AG04449 (cell line): ENCODE measurements at regions of chr4 and their contacts with region 1.

Region 1: GRCh38 chr4:87848622-87849351 is 16.0 kb downstream of the MEPE start:
- DNase-seq: no peak
- H3K4me3 ChIP-seq: no peak overlapping the region
- CTCF ChIP-seq: peak; percentile 60

Region 2: GRCh38 chr4:87268411-87268810 is 580.4 kb before region 1 on chr4:
- CTCF ChIA-PET with region 1: no interaction called
- POLR2A ChIA-PET with region 1: no interaction called
- DNase-seq: no peak
- H3K4me3 ChIP-seq: no peak overlapping the region
- CTCF ChIP-seq: no peak

Region 3: DNA sequence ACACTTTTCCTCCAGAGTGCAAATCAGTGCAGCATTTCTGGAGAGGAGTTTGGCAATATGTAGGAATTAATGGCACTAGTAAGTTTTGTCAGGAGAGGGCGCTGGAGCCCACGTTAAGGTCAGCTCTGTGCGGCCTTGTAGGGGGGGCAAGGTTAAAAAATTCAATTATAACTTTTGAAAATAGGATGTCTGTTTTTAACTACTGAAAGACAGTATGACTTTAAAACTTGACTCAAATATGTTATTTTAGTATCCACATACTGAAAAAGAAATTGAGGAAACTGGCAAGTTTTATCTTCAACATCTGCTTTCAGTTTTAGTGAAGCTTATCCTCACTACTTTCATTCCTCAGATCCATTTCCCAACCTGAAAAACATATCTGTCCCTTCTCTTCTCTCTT is 495.2 kb before region 1 on chr4:
- CTCF ChIA-PET with region 1: interaction called, 12 read pairs
- POLR2A ChIA-PET with region 1: no interaction called
- DNase-seq: no peak
- H3K4me3 ChIP-seq: no peak overlapping the region
- CTCF ChIP-seq: peak; percentile 46

Region 4: DNA sequence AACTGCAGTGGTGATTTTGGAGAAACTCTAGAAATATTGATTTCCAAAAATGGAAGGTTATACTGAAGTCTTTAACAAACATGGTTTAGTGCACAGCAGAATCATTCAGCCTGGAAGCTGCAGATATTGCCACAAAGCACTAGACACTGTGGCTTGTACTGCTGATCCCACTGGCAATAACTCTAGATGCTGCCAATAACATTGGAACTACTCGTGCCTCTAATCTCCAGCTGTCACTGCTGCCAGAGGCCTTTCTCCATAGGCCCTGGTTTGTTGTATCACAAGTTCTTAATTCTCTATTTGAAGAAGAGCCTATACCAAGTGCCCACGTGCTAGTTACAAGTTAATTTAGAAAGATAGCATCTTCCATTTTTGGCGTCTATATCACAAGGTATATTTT is 179.4 kb before region 1 on chr4:
- CTCF ChIA-PET with region 1: interaction called, 17 read pairs
- POLR2A ChIA-PET with region 1: no interaction called
- DNase-seq: no peak
- H3K4me3 ChIP-seq: no peak overlapping the region
- CTCF ChIP-seq: no peak

Region 5: GRCh38 chr4:87865960-87866598 is 17.3 kb after region 1 on chr4:
- CTCF ChIA-PET with region 1: interaction called, 17 read pairs
- POLR2A ChIA-PET with region 1: no interaction called
- DNase-seq: peak; percentile 16
- H3K4me3 ChIP-seq: no peak overlapping the region
- CTCF ChIP-seq: no peak

Region 6: GRCh38 chr4:87973283-87974169 is 124.7 kb after region 1 on chr4:
- CTCF ChIA-PET with region 1: interaction called, 348 read pairs
- POLR2A ChIA-PET with region 1: no interaction called
- DNase-seq: peak; percentile 82
- H3K4me3 ChIP-seq: peak overlapping the region; percentile 43
- CTCF ChIP-seq: peak; percentile 61

Region 7: GRCh38 chr4:88007304-88008121 is 158.7 kb after region 1 on chr4 and contains the start of gene PKD2:
- CTCF ChIA-PET with region 1: interaction called, 10 read pairs
- POLR2A ChIA-PET with region 1: no interaction called
- DNase-seq: no peak
- H3K4me3 ChIP-seq: peak within 1 kb of the TSS; percentile 78
- CTCF ChIP-seq: no peak

Region 8: DNA sequence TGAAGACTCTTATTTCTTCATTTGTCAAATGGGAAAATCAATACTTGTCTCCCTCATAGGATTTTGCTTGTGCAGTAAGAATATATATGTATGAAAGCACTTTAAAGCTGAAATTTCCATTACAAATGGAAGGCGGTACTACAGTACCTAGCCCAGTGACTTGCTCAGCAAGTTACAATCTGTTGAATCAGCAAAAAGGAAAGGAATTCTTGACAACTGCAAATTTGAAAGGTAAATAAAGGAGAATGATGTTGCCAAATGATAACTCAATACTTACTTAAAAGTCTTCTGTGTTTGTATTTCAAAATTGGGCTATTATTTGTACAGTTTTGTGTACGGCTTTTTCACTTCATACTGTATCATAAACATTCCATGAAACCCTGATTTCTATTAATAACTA is 229.8 kb after region 1 on chr4:
- CTCF ChIA-PET with region 1: no interaction called
- POLR2A ChIA-PET with region 1: no interaction called
- DNase-seq: no peak
- H3K4me3 ChIP-seq: no peak overlapping the region
- CTCF ChIP-seq: no peak

Region 9: DNA sequence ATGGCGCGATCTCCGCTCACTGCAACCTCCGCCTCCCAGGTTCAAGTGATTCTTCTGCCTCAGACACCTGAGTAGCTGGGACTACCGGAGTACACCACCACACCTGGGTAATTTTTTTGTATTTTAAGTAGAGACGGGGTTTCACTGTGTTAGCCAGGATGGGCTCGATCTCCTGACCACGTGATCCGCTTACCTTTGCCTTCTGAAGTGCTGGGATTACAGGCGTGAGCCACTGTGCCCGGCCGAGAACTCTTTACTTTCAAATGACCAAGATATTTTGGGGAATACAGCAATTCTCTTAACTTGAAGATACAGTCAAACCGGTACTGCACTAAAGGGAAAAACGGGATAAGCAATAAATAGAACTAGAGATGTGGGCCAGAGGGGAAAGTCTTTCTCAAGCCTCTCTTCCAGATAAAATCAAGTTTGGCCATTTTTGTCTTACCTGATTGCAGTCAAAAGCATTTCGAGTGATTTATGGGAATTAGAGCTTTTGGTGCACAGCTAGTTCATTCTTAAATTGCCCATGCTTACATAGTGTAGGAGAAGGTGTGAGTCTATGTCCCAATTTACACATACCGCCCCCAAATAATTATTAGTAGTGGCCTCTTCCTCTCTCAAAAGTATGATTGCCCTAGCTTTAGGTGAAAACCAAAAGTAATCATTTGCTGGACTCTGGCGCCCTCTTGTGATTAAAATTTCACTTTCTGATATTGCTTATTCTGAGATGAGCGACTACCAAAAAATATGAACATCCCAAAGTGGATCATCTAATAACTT is 362.9 kb after region 1 on chr4:
- CTCF ChIA-PET with region 1: interaction called, 210 read pairs
- POLR2A ChIA-PET with region 1: interaction called, 5 read pairs
- DNase-seq: no peak
- H3K4me3 ChIP-seq: no peak overlapping the region
- CTCF ChIP-seq: peak; percentile 28

Region 10: GRCh38 chr4:88390128-88390527 is 541.3 kb after region 1 on chr4:
- CTCF ChIA-PET with region 1: no interaction called
- POLR2A ChIA-PET with region 1: no interaction called
- DNase-seq: no peak
- H3K4me3 ChIP-seq: no peak overlapping the region
- CTCF ChIP-seq: no peak